ENCODE measurements at regions of chr13 and their contacts with region 1.

Region 1: GRCh38 chr13:35630551-35631275 is 154.2 kb upstream of the MAB21L1 start:
- DNase-seq: peak; percentile 16
- H3K4me3 ChIP-seq: no peak overlapping the region
- H3K27ac ChIP-seq: no peak overlapping the region
- H3K27me3 ChIP-seq: no peaks in the 10 kb centered on the region
- CTCF ChIP-seq: peak; percentile 87

Region 2: DNA sequence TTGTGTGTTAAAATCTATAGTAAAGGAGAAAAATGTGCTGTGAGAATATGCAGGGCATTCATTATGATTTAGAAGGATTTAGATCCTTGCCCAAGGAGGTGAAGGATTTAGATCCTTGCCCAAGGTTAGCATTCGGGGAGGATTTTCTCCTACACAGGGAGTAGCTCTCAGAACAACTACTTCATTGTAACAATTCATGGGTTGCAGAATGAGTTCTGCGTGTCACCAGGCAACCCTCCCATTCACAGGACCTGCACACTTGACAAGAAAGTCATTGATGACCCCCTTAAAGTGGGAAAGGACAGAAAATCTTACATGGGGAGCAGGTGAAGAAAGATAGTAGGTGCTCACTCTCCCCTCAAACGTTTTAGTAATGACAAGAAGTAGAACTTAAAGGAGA is 12.9 kb after region 1 on chr13:
- CTCF ChIA-PET with region 1: interaction called, 50 read pairs
- POLR2A ChIA-PET with region 1: no interaction called
- DNase-seq: no peak
- H3K4me3 ChIP-seq: no peak overlapping the region
- H3K27ac ChIP-seq: no peak overlapping the region
- H3K27me3 ChIP-seq: no peaks in the 10 kb centered on the region
- CTCF ChIP-seq: no peak

Region 3: GRCh38 chr13:35720690-35721554 is 90.2 kb after region 1 on chr13:
- CTCF ChIA-PET with region 1: interaction called, 234 read pairs
- POLR2A ChIA-PET with region 1: no interaction called
- DNase-seq: no peak
- H3K4me3 ChIP-seq: peak overlapping the region; percentile 47
- H3K27ac ChIP-seq: no peak overlapping the region
- H3K27me3 ChIP-seq: peaks cover 2% of the 10 kb centered on the region
- CTCF ChIP-seq: peak; percentile 100

Region 4: GRCh38 chr13:35818633-35819067 is 187.9 kb after region 1 on chr13:
- CTCF ChIA-PET with region 1: interaction called, 32 read pairs
- POLR2A ChIA-PET with region 1: no interaction called
- DNase-seq: no peak
- H3K4me3 ChIP-seq: no peak overlapping the region
- H3K27ac ChIP-seq: no peak overlapping the region
- H3K27me3 ChIP-seq: no peaks in the 10 kb centered on the region
- CTCF ChIP-seq: peak; percentile 78

Region 5: GRCh38 chr13:35984776-35985453 is 354.2 kb after region 1 on chr13:
- CTCF ChIA-PET with region 1: no interaction called
- POLR2A ChIA-PET with region 1: no interaction called
- DNase-seq: no peak
- H3K4me3 ChIP-seq: no peak overlapping the region
- H3K27ac ChIP-seq: no peak overlapping the region
- H3K27me3 ChIP-seq: peaks cover 4% of the 10 kb centered on the region
- CTCF ChIP-seq: no peak

Measured in AG04450 (cell line).